ENCODE measurements at regions of chr1 and their contacts with region 1.

Region 1: DNA sequence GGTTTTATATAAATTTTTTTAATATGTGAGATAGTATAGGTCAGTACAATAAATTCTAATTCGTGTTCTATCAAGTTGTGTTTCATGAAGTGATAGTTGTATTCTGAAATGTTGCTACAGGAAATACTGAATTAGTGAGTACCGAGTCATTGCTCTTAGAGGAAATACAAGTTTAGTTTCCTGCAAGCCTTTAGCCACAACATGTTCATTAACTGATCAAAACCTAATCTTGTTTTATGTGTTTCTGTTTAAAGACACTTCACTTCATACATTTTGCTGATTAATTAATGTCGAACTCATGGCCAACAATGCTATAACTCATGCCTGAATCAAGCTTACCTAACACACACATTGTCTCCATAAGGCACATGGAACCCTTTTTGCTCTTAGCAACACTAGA is 43.6 kb downstream of the LRRC7 start:
- DNase-seq: no peak
- H3K4me3 ChIP-seq: no peak overlapping the region
- H3K4me3 Mint-ChIP-seq: no peak overlapping the region
- H3K27ac ChIP-seq: no peak overlapping the region
- H3K27ac Mint-ChIP-seq: peak overlapping the region in 1 of 7 donors; percentile 22
- H3K4me1 ChIP-seq: no peaks in the 10 kb centered on the region
- H3K4me1 Mint-ChIP-seq: no peaks in the 10 kb centered on the region
- H3K27me3 ChIP-seq: no peaks in the 10 kb centered on the region
- H3K27me3 Mint-ChIP-seq: no peaks in the 10 kb centered on the region

Region 2: GRCh38 chr1:68938051-68938666 is 673.2 kb before region 1 on chr1:
- CTCF ChIA-PET with region 1: no interaction called
- POLR2A ChIA-PET with region 1: no interaction called
- intact Hi-C with region 1: loop called (anchors 5 kb)
- DNase-seq: no peak
- H3K4me3 ChIP-seq: no peak overlapping the region
- H3K4me3 Mint-ChIP-seq: no peak overlapping the region
- H3K27ac ChIP-seq: no peak overlapping the region
- H3K27ac Mint-ChIP-seq: no peak overlapping the region
- H3K4me1 ChIP-seq: no peaks in the 10 kb centered on the region
- H3K4me1 Mint-ChIP-seq: no peaks in the 10 kb centered on the region
- H3K27me3 ChIP-seq: no peaks in the 10 kb centered on the region
- H3K27me3 Mint-ChIP-seq: no peaks in the 10 kb centered on the region

Region 3: DNA sequence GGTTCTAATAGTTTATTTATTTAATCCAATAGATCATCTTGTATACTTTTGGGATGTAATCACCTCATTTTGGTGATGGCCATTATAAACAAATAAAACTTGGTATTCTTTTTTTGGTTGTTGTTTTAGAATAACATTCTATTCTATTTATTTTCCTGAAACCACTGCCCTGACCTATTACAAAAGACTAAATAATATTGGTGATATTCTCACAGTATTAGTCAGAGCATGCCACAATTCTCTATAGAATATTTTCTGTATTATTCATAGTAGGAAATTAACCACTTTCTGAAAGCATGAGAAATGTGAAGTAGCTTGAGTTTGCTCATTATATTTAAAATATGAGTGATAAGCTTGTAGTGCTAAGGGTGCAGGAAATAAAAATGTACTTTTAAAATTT is 97.7 kb before region 1 on chr1:
- CTCF ChIA-PET with region 1: no interaction called
- POLR2A ChIA-PET with region 1: no interaction called
- intact Hi-C with region 1: no loop called
- DNase-seq: no peak
- H3K4me3 ChIP-seq: no peak overlapping the region
- H3K4me3 Mint-ChIP-seq: no peak overlapping the region
- H3K27ac ChIP-seq: no peak overlapping the region
- H3K27ac Mint-ChIP-seq: no peak overlapping the region
- H3K4me1 ChIP-seq: no peaks in the 10 kb centered on the region
- H3K4me1 Mint-ChIP-seq: no peaks in the 10 kb centered on the region
- H3K27me3 ChIP-seq: no peaks in the 10 kb centered on the region
- H3K27me3 Mint-ChIP-seq: no peaks in the 10 kb centered on the region

Region 4: GRCh38 chr1:69671363-69672010 is 60.2 kb after region 1 on chr1:
- CTCF ChIA-PET with region 1: no interaction called
- POLR2A ChIA-PET with region 1: no interaction called
- intact Hi-C with region 1: no loop called
- DNase-seq: no peak
- H3K4me3 ChIP-seq: no peak overlapping the region
- H3K4me3 Mint-ChIP-seq: no peak overlapping the region
- H3K27ac ChIP-seq: no peak overlapping the region
- H3K27ac Mint-ChIP-seq: no peak overlapping the region
- H3K4me1 ChIP-seq: no peaks in the 10 kb centered on the region
- H3K4me1 Mint-ChIP-seq: no peaks in the 10 kb centered on the region
- H3K27me3 ChIP-seq: no peaks in the 10 kb centered on the region
- H3K27me3 Mint-ChIP-seq: no peaks in the 10 kb centered on the region